ENCODE measurements at regions of chr4 and their contacts with region 1.

Region 1: DNA sequence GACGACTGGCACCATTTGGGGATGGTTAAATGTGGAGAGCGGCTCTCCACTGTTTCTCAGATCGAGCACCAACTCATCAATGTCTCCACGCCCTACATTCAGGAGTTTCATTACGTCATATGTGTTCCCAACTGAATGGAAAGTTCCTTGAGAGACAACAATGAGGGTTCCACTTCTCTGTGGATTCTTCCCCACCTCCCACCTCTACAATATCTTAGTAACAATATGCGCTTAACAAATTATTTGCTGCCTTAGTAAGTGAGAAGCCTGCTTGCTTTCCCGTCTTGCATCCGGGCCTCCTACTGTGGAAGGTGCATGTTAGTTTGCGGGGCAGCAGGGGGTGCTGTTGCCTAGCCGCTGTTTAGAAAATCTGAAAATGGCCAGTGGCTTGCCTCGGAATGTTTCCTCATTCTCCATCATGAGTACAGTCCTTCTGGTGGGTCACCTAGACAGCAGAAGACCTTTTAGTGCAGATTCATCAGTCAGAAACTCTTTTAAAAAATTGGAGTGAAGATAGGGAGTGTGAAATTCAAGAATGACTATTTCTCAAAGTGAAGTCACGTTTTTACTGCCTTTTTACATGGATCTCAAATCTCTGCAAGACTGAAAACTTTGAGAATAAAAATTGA is 55.7 kb downstream of the PHOX2B start:
- DNase-seq: peak; percentile 69
- ATAC-seq: peak; percentile 79

Region 2: DNA sequence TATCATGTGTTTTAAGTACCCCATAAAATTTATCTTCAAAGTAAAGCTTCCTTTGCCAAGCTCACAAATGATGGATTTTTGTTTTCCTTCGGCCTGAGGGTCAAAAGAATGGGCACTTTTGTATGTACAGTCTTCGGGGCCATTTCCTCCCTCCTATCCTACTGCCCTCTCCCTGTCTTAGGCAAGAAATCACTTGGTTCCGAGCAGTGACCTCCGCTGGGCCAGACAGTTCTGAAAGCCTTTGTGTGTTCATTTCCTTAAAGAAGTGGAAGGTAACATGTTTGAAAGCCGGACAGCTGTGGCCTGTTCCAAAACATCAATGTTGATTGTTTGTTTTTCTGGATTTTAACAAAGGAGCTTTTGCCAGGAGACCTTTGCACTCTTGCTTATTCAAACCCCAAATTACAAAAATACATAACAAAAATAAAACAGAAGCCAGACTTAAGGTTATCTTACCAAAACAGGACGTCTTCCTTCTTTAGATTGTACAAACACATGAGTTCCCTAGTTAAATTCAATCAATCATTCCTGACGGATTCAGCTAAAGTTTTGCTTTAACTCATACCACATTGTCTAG is 265.4 kb before region 1 on chr4:
- intact Hi-C with region 1: no loop called
- DNase-seq: no peak
- ATAC-seq: peak; percentile 33

Region 3: DNA sequence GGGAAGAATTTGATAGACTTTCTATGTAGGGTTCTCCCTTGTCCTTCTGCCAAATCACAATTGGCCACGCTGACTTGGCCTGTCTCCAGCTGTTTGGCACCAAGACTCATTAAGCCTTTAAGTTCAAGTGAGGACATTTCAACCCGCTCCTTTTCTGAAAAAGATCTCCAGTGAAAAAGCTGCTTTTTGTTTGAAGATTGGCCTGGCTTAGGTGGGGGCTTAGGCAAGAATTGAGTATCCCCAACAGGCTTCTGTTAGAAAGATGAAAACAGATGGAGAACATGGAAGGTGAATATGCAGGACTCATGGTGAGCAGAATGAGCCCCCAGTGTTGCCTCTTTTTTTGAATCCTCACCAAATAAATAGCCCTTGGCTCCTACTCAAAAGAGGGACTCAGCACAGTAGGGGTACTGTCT is 183.4 kb before region 1 on chr4:
- intact Hi-C with region 1: no loop called
- DNase-seq: no peak
- ATAC-seq: no peak

Region 4: DNA sequence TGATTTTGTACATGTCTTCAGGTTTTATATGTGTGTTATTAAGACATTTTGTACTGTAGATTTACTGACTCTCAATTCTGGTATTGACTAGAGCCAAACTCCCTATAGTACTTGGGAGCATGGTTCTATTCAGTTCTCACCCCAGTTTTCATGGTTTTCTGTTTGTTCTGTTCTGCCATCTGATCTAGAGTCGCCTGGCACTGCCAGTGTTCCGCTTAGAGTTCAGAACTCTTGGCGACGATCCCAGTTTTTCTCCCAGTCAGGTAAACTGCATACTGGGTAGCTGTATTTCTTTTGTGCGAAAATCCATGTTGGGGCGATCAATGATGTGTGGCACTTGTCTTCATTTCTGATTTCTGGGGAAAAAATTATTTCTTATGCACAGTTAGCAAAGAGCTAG is 22.3 kb before region 1 on chr4:
- intact Hi-C with region 1: no loop called
- DNase-seq: no peak
- ATAC-seq: no peak

Region 5: DNA sequence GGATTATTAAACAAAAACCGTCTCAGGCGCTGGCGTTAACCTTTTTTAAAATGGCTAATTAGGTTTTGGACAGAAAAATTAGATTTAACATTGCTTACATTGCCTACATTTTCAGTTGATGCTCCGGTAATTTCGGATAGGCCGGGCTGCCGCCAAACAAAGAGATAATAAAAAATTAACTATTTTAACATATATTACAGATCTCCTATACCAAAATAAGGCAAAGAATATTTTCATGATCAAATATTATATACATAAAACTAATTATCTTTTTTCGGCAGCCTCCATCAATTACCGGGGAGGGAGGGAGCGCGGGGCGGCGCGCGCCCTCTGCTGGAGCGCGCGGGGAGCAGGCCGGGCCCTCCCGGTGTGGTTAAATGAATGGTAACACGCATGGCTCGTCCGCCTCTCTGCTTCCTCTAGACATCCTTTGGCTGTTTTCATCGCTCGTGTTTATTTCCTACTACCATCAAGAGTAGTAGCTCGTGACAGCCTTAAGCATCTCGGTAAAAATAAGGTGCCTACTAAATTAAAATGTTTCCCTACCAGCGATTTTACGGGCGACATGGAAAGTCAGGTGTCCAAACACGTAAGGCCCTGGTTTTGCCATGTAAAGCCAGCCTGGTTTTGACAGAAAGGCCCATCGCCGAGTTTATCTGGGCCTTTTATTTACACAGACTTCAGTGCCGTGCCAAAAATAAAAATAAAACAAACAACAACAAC is 190.0 kb after region 1 on chr4:
- intact Hi-C with region 1: loop called (anchors 10 kb)
- DNase-seq: no peak
- ATAC-seq: peak; percentile 84

Region 6: DNA sequence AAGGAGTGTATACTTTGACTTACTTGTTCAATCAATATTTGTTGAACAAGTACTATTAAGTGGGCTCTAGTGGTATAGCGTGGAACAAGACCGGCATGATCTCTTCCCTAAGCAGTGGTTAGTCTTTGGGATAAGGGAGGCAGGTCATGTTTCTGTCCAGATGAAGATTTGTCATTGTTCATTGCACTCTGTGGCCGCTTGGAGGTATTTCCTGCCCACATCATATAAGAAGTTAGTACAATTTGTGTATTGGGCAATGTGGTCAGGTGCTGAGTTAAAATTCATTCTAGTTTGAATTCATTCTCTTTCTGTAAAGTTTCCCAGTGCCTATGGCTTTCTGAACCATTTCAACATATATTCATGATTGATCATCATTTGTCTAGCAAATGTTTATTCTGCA is 603.4 kb after region 1 on chr4:
- intact Hi-C with region 1: no loop called
- DNase-seq: no peak
- ATAC-seq: no peak